GM13976 (cell line): ENCODE measurements at regions of chr14 and their contacts with region 1.

Region 1: GRCh38 chr14:33839193-33840076 is 111.4 kb downstream of the EGLN3 start:
- DNase-seq: peak; percentile 63
- CTCF ChIP-seq: peak; percentile 68

Region 2: DNA sequence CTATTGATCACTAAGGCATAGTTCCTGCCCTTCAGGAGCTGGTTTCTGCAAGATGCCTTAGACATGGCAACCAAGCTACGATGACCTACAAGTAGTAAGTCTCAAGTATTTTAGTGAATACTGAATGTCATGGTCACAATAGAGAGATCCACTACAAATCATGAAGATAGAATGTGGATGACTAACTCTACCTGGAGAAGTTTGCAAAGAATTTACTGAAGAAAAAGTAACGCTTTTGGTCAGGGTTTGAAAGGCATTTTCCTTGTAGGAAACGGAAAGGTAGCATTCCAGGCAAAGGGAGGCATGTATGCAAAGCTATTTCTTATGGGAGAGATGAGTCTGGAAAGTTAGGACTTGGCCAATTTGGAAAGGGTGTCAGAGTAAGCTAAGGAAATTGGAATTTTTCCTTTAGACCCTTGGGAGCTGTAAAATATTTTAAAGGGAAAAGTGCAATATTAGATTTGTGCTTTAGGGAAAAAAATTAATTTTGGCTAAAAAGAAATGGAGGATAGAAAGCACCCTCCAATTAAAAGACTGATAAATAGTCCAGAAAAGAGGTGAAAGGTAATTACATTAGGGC is 266.0 kb before region 1 on chr14:
- in situ Hi-C with region 1: no loop called
- DNase-seq: no peak
- CTCF ChIP-seq: no peak

Region 3: GRCh38 chr14:33979613-33980276 is 140.3 kb after region 1 on chr14:
- in situ Hi-C with region 1: no loop called
- DNase-seq: no peak
- CTCF ChIP-seq: no peak

Region 4: GRCh38 chr14:34227834-34228649 is 388.6 kb after region 1 on chr14:
- in situ Hi-C with region 1: loop called (anchors 10 kb)
- DNase-seq: peak; percentile 76
- CTCF ChIP-seq: peak; percentile 66